ENCODE measurements at regions of chr19 and their contacts with region 1.

Region 1: DNA sequence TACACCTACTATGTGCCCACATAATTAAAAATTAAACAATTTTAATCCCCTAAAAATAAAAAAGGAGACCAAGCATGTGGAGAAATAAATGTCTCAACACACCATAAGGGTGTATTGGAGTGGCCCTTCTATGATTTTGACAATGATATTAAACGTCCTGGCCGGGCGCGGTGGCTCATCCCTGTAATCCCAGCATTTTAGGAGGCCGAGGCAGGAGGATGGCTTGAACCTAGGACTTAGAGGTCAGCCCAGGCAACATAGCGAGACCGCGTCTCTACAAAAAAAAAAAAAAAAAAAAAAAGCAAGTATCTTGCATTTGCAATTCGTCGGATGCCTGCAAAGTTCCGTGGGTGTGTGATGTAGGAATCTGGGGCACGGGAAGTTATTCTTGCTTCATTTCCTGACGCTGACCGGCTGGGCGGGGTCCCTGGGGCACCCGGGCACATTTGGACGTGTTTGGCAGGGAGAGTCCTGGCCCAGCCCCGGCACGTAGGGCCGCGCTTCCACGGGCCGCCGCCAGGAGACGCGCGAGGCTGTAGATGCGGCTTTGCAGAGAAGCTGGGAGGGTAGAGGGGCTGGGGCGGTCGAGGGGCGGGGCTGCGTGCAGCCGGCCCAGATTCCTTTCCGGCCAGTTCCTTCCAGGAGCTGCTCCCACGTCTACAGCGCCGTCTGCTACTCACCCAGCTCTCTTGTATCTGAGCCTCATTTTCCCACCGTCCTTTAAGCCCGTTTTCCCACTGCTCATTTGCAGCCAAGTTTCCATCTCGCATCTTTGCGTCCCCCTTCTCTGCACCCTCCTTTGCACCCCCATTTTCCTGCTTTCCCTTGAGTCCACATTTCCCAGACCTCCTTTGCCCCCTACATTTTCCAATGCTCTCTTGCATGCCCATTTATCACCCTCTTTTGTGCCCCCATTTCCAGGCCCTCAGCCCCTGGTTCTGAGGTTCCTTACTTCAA is 2.2 kb upstream of the TSPAN16 start:
- DNase-seq: peak; percentile 99
- ATAC-seq: peak; percentile 94
- H3K4me3 Mint-ChIP-seq: peak overlapping the region; percentile 61
- H3K27ac Mint-ChIP-seq: peak overlapping the region; percentile 98
- H3K4me1 Mint-ChIP-seq: peaks cover 8% of the 10 kb centered on the region
- H3K27me3 Mint-ChIP-seq: no peaks in the 10 kb centered on the region; the same call in 1 of the 2 replicates
- CTCF ChIP-seq: peak; percentile 90

Region 2: DNA sequence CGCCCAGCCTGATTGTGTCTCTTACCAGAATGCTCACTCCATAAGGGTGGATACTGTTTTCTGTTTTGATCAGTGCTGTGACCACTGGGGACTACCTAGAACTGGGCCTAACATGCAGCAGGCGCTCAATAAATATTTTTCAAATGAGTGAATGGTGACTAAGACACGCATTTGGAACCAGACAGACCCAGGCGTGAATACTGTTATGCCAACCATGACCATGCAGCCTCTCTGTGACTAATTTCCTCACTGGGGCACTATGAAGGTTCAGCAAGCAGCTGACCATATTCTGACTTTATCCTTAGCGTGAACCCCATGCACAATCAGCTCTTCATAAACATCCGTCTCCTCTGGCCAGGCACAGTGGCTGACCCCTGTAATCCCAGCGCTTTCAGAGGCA is 125.1 kb before region 1 on chr19:
- CTCF ChIA-PET with region 1: no interaction called
- POLR2A ChIA-PET with region 1: no interaction called
- DNase-seq: no peak
- ATAC-seq: no peak
- H3K4me3 Mint-ChIP-seq: no peak overlapping the region
- H3K27ac Mint-ChIP-seq: 0 out of 2 replicates have a peak overlapping the region, but pooled peaks have one; percentile 27
- H3K4me1 Mint-ChIP-seq: no peaks in the 10 kb centered on the region
- H3K27me3 Mint-ChIP-seq: no peaks in the 10 kb centered on the region; the same call in 1 of the 2 replicates
- CTCF ChIP-seq: no peak

Region 3: DNA sequence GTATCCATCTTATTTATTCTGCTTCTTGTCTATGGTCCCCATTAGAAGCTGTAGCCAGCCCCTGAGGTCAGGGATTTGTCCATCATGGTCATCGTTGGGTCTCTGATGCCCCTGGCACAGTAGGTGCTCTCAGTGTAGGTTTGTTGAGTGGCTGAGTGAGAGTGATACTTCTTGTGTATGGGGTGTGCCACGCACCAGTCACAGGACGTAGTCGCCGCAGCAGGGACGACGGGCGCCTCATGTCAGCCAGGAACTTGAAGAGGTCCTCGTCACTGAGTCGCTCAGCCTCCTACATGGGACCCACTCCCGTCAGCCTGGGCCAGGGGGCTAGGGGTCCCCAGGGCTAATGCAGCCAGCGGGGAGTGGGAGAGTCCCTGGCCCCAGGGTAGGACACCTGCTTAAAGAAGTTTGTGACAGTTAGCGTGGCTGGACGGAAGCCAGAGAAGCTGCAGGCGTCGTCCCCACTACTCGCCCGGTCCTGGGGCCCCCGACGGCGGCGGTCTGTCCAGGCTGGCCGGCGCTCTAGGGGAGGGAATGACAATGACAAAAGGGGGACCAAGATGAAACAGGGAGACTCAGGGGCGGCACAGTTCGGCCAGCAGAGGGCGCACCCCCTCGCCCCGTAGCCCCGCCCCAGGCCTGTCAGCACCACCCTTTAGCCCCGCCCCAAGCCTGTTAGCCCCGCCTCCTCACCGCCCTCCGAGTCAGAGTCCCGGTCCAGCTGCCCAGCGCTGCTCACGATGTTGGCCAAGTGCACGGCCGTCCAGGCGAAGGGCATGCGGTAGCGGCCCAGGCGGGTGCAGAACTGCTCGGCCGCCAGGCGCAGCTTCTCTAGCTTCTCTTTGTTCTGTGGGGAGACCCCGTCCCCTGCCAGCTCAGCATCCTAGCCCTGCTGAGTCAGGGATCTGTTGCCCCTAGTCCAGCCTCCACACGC is 50.6 kb before region 1 on chr19:
- CTCF ChIA-PET with region 1: interaction called, 10 read pairs
- POLR2A ChIA-PET with region 1: no interaction called
- DNase-seq: peak; percentile 99
- ATAC-seq: peak; percentile 97
- H3K4me3 Mint-ChIP-seq: peak overlapping the region; percentile 61
- H3K27ac Mint-ChIP-seq: no peak overlapping the region
- H3K4me1 Mint-ChIP-seq: peaks cover 4% of the 10 kb centered on the region
- H3K27me3 Mint-ChIP-seq: no peaks in the 10 kb centered on the region
- CTCF ChIP-seq: peak; percentile 91

Region 4: GRCh38 chr19:11306334-11306733 is 12.6 kb after region 1 on chr19:
- CTCF ChIA-PET with region 1: interaction called, 42 read pairs
- POLR2A ChIA-PET with region 1: no interaction called
- DNase-seq: no peak
- ATAC-seq: no peak
- H3K4me3 Mint-ChIP-seq: no peak overlapping the region
- H3K27ac Mint-ChIP-seq: no peak overlapping the region
- H3K4me1 Mint-ChIP-seq: no peaks in the 10 kb centered on the region
- H3K27me3 Mint-ChIP-seq: no peaks in the 10 kb centered on the region; the same call in 1 of the 2 replicates
- CTCF ChIP-seq: no peak

Region 5: GRCh38 chr19:11346092-11346940 is 52.6 kb after region 1 on chr19 and contains the starts of genes CCDC159 and TMEM205:
- CTCF ChIA-PET with region 1: interaction called, 37 read pairs
- POLR2A ChIA-PET with region 1: interaction called, 4 read pairs
- DNase-seq: peak; percentile 99
- ATAC-seq: peak; percentile 96
- H3K4me3 Mint-ChIP-seq: peak within 1 kb of the TSS; percentile 95
- H3K27ac Mint-ChIP-seq: peak within 1 kb of the TSS; percentile 87
- H3K4me1 Mint-ChIP-seq: peaks cover 24% of the 10 kb centered on the region
- H3K27me3 Mint-ChIP-seq: peaks cover 20% of the 10 kb centered on the region; the same call in 1 of the 2 replicates
- CTCF ChIP-seq: no peak
- total RNA-seq, gene CCDC159: 5.5 to 8.5 TPM (median 6.8 TPM) in 3 replicates
- total RNA-seq, gene TMEM205: 69.9 to 78.3 TPM (median 76.0 TPM) in 3 replicates

Region 6: GRCh38 chr19:11374433-11375142 is 80.9 kb after region 1 on chr19 and contains the start of gene SWSAP1:
- CTCF ChIA-PET with region 1: interaction called, 59 read pairs
- POLR2A ChIA-PET with region 1: no interaction called
- DNase-seq: peak; percentile 98
- ATAC-seq: peak; percentile 93
- H3K4me3 Mint-ChIP-seq: no peak within 1 kb of the TSS
- H3K27ac Mint-ChIP-seq: no peak within 1 kb of the TSS; the same call in 1 of the 2 replicates
- H3K4me1 Mint-ChIP-seq: peaks cover 19% of the 10 kb centered on the region
- H3K27me3 Mint-ChIP-seq: no peaks in the 10 kb centered on the region
- CTCF ChIP-seq: no peak
- total RNA-seq, gene SWSAP1: 2.4 to 3.9 TPM (median 3.0 TPM) in 3 replicates

Region 7: DNA sequence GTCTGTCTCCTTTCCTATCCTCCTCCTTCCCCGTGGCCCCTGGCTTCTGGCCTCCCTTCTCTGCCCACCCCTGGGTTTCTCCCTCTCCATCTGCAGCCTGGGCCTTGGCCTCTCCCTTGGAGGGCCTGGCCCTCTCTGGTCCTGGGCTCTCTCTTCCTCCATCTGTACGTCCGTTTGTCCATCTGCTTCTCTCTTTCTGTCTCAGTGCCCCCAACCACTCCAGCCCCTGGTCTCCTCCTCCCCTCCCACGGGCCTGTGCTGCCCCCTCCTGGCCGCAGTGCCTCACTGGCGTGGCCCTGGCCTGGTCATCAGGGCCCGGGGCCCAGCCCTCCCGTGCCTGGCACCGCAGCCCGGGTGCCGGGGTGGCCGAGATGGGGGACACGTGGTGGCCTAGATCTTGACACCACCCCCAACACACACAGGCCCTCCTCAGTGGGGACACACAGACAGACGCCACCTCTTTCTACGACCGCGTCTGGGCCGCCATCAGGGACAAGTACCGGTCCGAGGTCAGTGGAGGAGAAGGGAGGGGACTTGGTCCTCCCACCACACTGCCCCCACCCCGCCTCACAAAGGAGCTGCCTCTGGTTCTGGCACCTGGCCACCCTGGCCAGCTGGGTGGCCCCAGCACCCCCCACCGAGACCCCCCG is 153.1 kb after region 1 on chr19:
- CTCF ChIA-PET with region 1: interaction called, 14 read pairs
- POLR2A ChIA-PET with region 1: no interaction called
- DNase-seq: peak; percentile 88
- ATAC-seq: peak; percentile 83
- H3K4me3 Mint-ChIP-seq: no peak overlapping the region
- H3K27ac Mint-ChIP-seq: no peak overlapping the region
- H3K4me1 Mint-ChIP-seq: peaks cover 7% of the 10 kb centered on the region
- H3K27me3 Mint-ChIP-seq: no peaks in the 10 kb centered on the region; the same call in 1 of the 2 replicates
- CTCF ChIP-seq: peak; percentile 77

Measured in WTC11 (cell line).